ENCODE measurements at regions of chr17 and their contacts with region 1.

Region 1: GRCh38 chr17:69239611-69240600 is 11.3 kb upstream of the ABCA10 start:
- DNase-seq: no peak
- H3K4me3 ChIP-seq: no peak overlapping the region
- H3K4me1 ChIP-seq: no peaks in the 10 kb centered on the region
- H3K27me3 ChIP-seq: no peaks in the 10 kb centered on the region

Region 2: GRCh38 chr17:68777243-68777855 is 462.6 kb before region 1 on chr17:
- in situ Hi-C with region 1: loop called (anchors 5 kb)
- DNase-seq: peak; percentile 25 to 58
- H3K4me3 ChIP-seq: no peak overlapping the region
- H3K4me1 ChIP-seq: no peaks in the 10 kb centered on the region
- H3K27me3 ChIP-seq: no peaks in the 10 kb centered on the region

Region 3: GRCh38 chr17:69093279-69093789 is 146.6 kb before region 1 on chr17:
- in situ Hi-C with region 1: no loop called
- DNase-seq: no peak
- H3K4me3 ChIP-seq: no peak overlapping the region
- H3K4me1 ChIP-seq: no peaks in the 10 kb centered on the region
- H3K27me3 ChIP-seq: no peaks in the 10 kb centered on the region

Region 4: GRCh38 chr17:69175812-69176795 is 63.8 kb before region 1 on chr17:
- in situ Hi-C with region 1: no loop called
- DNase-seq: no peak
- H3K4me3 ChIP-seq: no peak overlapping the region
- H3K4me1 ChIP-seq: peaks cover 3% of the 10 kb centered on the region
- H3K27me3 ChIP-seq: no peaks in the 10 kb centered on the region

Measured in HAP-1 (cell line).